Sciatic nerve (tissue), 2 donors: ENCODE measurements at regions of chr12 and their contacts with region 1.

Region 1: DNA sequence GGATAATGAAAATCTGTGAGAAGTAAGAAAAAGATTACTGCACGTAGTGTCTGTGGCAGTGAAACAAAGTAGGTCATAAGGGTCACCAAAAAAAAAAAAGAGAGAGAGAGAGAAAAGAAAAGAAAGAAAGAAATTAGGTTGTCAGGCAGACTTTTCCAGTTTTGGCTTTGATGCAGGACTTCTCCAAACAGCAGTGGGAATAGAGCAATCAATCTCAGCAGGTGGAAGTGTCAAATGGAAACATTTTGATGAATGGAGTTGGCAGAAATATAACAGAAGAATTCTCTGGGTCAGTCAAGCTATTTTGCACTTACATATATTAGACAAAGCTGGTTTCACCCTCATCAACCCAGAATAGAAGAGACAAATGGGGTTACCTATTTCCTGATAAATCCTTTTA is 745.8 kb downstream of the SLC6A15 start:
- DNase-seq: no peak
- ATAC-seq: no peak

Region 2: GRCh38 chr12:82314406-82314892 is 1852.4 kb before region 1 on chr12:
- intact Hi-C with region 1: loop called (anchors 5 kb)
- DNase-seq: no peak
- ATAC-seq: no peak

Region 3: DNA sequence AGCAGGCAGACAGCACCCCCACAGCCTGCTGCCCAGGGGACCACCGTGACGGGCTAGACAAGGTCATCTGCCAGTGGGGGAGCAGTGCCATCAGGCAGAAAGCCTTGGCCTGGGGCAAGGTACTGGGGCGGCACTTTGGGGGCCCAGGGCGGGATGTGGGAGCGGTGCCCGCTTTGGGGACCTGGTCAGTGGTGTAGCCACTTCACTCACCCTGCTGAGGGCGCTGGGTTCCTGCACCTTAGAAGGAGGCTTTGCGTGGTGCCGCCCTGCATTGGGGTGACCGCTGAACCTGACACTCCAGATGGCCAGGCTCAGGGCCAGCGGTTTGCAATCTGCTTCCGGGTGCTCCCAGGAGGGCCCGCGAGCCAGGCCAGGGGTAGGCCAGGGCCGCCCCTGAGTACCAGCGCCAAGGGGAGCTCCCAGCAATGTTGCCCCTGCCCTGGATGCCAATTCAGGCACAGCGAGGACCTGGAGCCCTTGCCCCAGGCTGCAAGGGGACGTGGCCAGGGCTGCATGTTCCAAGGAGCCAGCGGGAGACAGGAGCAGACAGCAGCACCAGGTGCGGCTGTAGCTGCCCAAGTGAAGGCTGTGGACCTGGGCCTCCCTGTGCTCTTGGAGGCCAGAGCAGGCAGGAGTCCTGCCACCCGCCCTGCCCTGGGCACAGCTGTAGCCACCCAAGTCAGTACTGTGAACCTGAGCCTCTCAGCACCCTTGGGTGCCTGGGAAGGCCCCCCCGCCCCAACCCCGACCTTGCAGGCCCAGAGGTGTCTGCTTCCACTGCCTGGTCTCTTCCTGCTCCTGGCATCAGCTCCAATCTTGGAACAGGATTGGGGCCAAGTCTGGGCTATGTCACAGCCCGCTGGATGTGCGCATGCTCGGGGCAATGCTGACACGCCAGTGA is 195.1 kb after region 1 on chr12:
- intact Hi-C with region 1: no loop called
- DNase-seq: no peak
- ATAC-seq: peak; percentile 22